WTC11 (cell line): ENCODE measurements at regions of chr1 and their contacts with region 1.

Region 1: DNA sequence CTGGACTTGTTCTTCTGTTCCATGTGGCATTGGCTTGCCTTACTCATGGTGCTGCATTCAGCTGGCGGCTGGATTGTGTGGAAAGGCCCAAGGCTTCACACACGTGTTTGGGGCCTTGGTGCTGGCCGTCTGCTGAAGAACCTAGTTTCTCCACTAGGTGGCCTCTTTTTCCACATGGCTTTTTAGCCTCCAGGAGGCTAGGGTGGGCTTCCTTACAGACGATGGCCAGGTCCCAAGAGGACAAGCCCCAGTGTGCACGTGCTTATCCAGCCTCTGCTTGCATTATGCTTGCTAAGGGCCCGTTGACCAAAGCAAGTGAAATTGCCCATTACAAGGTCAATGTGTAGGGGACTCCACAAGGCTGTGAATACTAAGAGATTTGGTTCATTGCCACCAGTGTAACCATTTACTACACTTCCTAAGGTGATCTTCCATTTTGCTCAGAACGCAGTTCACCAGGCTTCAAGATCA is 47.5 kb upstream of the FOXO6 start:
- DNase-seq: peak; percentile 59
- ATAC-seq: peak; percentile 79
- H3K4me3 Mint-ChIP-seq: no peak overlapping the region
- H3K27ac Mint-ChIP-seq: no peak overlapping the region
- H3K4me1 Mint-ChIP-seq: peaks cover 22% of the 10 kb centered on the region
- H3K27me3 Mint-ChIP-seq: peaks cover 10% of the 10 kb centered on the region
- CTCF ChIP-seq: peak; percentile 70

Region 2: GRCh38 chr1:40630488-40631381 is 683.0 kb before region 1 on chr1:
- CTCF ChIA-PET with region 1: no interaction called
- POLR2A ChIA-PET with region 1: no interaction called
- DNase-seq: peak; percentile 81
- ATAC-seq: peak; percentile 97
- H3K4me3 Mint-ChIP-seq: no peak overlapping the region
- H3K27ac Mint-ChIP-seq: no peak overlapping the region
- H3K4me1 Mint-ChIP-seq: no peaks in the 10 kb centered on the region
- H3K27me3 Mint-ChIP-seq: no peaks in the 10 kb centered on the region
- CTCF ChIP-seq: peak; percentile 66

Region 3: GRCh38 chr1:41277371-41277975 is 36.2 kb before region 1 on chr1:
- CTCF ChIA-PET with region 1: interaction called, 48 read pairs
- POLR2A ChIA-PET with region 1: no interaction called
- DNase-seq: no peak
- ATAC-seq: no peak
- H3K4me3 Mint-ChIP-seq: no peak overlapping the region
- H3K27ac Mint-ChIP-seq: no peak overlapping the region
- H3K4me1 Mint-ChIP-seq: no peaks in the 10 kb centered on the region
- H3K27me3 Mint-ChIP-seq: no peaks in the 10 kb centered on the region
- CTCF ChIP-seq: no peak

Region 4: DNA sequence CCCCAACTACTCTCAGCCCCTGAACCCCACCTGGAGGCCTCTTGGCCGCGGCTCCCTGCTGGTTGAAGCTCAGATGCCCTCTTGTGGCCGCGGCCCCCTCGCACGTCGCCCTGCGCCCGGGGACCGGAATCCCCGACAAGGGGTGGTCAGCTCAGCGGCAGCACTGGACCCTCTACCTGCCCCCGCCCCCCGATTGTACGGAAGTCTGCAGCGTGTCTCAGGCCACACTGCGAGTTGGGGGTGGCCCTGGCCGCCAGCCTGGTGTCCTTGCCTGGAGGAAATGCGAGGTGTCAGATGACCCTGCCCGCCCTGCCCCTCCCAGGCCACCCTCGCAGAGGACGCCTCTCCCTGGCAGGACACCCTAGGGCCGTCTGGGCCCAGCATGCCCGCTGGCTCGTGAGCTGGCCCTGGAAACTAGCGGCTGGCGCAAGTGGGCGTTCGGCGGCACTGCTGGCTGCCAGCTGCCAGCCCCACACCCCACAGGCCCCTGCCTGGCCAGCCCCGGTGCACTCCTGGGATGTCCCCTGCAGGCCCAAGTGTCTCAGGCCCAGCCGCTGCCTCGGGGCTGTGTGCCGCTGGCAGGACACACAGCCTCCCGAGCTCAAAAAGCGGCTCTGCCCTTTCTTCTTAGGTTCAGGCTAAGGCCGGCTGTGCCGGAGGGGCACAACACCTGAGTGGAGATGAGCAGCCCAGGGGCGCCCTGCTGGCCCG is 110.0 kb after region 1 on chr1:
- CTCF ChIA-PET with region 1: interaction called, 30 read pairs
- POLR2A ChIA-PET with region 1: no interaction called
- DNase-seq: peak; percentile 66
- ATAC-seq: peak; percentile 52
- H3K4me3 Mint-ChIP-seq: no peak overlapping the region
- H3K27ac Mint-ChIP-seq: no peak overlapping the region
- H3K4me1 Mint-ChIP-seq: peaks cover 5% of the 10 kb centered on the region
- H3K27me3 Mint-ChIP-seq: no peaks in the 10 kb centered on the region
- CTCF ChIP-seq: no peak

Region 5: DNA sequence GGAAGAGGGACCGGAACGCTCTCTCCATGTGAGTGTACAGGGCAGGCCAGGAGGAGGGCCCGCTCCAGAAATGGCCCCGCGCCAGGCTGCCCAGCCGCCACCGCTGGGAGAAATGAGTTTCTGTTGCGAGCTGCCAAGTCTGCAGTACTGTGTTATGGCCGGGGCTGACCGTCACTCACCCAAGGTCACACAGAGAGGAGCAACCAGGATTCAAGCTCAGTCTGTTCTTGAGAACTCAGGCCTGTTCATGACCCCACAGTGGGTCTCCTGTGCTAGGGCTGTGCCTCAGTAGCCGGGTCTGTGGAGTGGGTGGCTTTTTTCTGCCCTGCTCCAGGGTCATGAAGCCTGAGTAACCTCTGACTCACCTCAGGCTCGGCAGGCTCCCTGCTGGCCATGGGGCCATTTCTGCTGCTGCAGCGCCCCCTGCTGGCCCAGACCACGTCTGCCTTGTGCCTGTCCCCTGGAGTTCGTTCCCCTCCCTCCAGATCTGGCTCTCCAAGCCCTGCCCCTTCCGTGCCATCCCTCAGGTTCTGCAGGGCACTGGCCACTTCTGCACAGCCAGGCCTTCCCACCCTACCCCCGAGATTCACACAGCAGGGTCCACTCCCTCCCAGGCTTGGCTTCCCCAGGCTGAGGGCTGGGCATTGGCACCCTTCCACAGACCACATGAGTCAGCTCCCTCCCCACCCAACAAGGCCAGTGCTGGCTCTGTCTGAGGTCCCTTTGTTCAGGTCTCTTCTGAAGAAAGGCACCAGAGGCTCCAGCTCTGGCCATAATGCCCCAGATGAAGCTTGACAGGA is 119.0 kb after region 1 on chr1:
- CTCF ChIA-PET with region 1: interaction called, 48 read pairs
- POLR2A ChIA-PET with region 1: no interaction called
- DNase-seq: peak; percentile 94
- ATAC-seq: peak; percentile 85
- H3K4me3 Mint-ChIP-seq: no peak overlapping the region
- H3K27ac Mint-ChIP-seq: no peak overlapping the region
- H3K4me1 Mint-ChIP-seq: peaks cover 33% of the 10 kb centered on the region
- H3K27me3 Mint-ChIP-seq: peaks cover 3% of the 10 kb centered on the region; the same call in 1 of the 2 replicates
- CTCF ChIP-seq: peak; percentile 98